CD4-positive, alpha-beta T cell (primary cell): ENCODE measurements at regions of chr11 and their contacts with region 1.

Region 1: DNA sequence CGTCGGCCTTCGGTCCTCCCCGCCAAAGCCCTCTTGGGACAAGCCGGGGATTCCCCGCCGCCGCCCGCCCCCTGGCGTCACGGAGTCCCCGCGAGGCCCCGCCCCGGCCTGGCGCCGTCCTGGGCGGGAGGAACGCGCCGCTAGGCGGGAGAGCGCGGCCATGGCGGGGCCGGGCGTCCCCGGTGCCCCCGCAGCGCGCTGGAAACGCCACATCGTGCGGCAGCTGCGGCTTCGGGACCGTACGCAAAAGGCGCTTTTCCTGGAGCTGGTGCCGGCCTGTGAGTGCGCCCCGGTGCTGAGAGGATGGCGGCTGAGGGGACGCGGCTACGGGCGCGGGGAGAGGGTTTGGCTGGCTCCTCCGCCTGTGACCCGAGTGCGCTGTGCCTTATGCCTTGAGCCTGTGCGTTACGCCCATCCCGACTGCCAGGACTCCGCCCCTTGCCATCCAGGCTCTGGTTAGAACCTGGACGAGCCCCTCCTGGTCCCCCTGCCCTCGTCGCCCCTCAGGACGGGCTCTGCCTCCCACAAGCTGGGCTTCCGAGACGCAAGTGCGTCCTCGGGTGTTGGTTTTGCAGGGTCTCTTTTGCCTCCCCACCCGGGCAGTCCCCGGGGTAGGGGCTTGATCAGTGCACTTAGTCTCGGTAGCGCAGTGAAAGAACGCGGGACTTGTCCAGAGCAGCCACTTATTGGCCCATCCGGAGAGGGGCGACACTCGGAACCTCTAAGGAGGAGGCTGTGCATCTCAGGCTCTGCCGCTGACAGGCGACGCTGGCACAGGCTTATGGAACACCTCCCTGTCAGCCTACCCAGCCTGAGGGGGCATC is at the start of gene ATG16L2:
- DNase-seq: peak in 13 of 14 experiments; percentile 78 to 95 (median 87)
- ATAC-seq: peak; percentile 81
- H3K4me3 ChIP-seq: peak within 1 kb of the TSS; percentile 96
- H3K4me3 Mint-ChIP-seq: peak within 1 kb of the TSS; percentile 99
- H3K27ac ChIP-seq: peak within 1 kb of the TSS; percentile 97 to 100
- H3K27ac Mint-ChIP-seq: peak within 1 kb of the TSS; percentile 97
- H3K4me1 ChIP-seq: peaks cover 38% of the 10 kb centered on the region
- H3K4me1 Mint-ChIP-seq: peaks cover 57% of the 10 kb centered on the region
- H3K27me3 ChIP-seq: no peaks in the 10 kb centered on the region
- H3K27me3 Mint-ChIP-seq: no peaks in the 10 kb centered on the region
- CTCF ChIP-seq: peak; percentile 29
- total RNA-seq, gene ATG16L2: 58.3 to 61.6 TPM

Region 2: GRCh38 chr11:71928737-71929452 is 885.6 kb before region 1 on chr11 and contains the start of gene RNF121:
- CTCF ChIA-PET with region 1: no interaction called
- POLR2A ChIA-PET with region 1: no interaction called
- intact Hi-C with region 1: loop called in 1 of 2 experiments (anchors 10 kb)
- DNase-seq: peak; percentile 93 to 98 (median 97)
- ATAC-seq: peak; percentile 86
- H3K4me3 ChIP-seq: peak within 1 kb of the TSS; percentile 79
- H3K4me3 Mint-ChIP-seq: peak within 1 kb of the TSS; percentile 96
- H3K27ac ChIP-seq: peak within 1 kb of the TSS; percentile 92 to 95
- H3K27ac Mint-ChIP-seq: peak within 1 kb of the TSS; percentile 93
- H3K4me1 ChIP-seq: peaks cover 32% of the 10 kb centered on the region
- H3K4me1 Mint-ChIP-seq: peaks cover 57% of the 10 kb centered on the region
- H3K27me3 ChIP-seq: no peaks in the 10 kb centered on the region
- H3K27me3 Mint-ChIP-seq: no peaks in the 10 kb centered on the region
- CTCF ChIP-seq: no peak
- total RNA-seq, gene RNF121: 10.1 to 10.4 TPM

Region 3: DNA sequence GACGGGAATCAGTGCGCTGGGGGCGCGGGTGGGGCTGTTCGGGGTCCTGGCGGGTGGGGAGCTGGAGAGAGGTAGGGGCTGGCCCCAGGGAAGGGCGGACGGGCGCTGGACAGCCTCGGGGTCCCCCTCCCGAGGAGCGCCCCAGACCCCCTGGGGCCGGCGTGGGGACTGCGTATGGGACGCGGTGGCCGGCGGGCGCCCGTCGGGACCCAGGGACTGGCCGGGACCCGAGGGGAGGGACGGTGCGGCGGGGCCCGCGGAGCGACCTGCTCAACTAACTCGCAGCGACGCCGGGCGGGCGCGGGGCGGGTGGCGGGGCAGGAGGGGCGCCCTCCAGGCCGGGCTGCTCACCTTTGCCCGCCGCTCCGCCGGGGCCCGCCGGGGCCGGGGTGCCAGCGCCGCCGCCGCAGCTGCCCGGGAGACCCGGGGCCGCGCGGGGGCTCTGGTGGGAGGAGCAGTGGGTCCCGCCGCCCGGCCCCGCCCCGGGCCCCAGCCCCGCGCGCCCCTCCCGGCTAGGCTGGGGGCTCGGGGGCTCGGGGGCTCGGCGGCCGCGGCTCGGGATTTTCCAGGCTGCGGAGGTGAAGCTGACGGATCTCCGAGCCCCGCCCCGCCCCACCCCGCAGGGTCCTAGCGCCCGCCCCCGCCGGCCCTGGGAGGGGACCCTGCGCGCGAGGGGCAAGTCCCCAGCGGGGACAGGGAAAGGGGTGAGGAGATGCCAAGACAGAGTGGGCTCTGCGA is 33.0 kb before region 1 on chr11:
- CTCF ChIA-PET with region 1: interaction called, 3 read pairs
- POLR2A ChIA-PET with region 1: interaction called, 5 read pairs
- intact Hi-C with region 1: loop called in 1 of 2 experiments (anchors 1 kb)
- DNase-seq: peak; percentile 22 to 87 (median 50)
- ATAC-seq: peak; percentile 81
- H3K4me3 ChIP-seq: peak overlapping the region; percentile 55
- H3K4me3 Mint-ChIP-seq: peak overlapping the region; percentile 90
- H3K27ac ChIP-seq: peak overlapping the region in 1 of 2 donors; percentile 17
- H3K27ac Mint-ChIP-seq: peak overlapping the region; percentile 45
- H3K4me1 ChIP-seq: peaks cover 45% of the 10 kb centered on the region
- H3K4me1 Mint-ChIP-seq: peaks cover 24% of the 10 kb centered on the region
- H3K27me3 ChIP-seq: no peaks in the 10 kb centered on the region
- H3K27me3 Mint-ChIP-seq: no peaks in the 10 kb centered on the region
- CTCF ChIP-seq: no peak

Region 4: DNA sequence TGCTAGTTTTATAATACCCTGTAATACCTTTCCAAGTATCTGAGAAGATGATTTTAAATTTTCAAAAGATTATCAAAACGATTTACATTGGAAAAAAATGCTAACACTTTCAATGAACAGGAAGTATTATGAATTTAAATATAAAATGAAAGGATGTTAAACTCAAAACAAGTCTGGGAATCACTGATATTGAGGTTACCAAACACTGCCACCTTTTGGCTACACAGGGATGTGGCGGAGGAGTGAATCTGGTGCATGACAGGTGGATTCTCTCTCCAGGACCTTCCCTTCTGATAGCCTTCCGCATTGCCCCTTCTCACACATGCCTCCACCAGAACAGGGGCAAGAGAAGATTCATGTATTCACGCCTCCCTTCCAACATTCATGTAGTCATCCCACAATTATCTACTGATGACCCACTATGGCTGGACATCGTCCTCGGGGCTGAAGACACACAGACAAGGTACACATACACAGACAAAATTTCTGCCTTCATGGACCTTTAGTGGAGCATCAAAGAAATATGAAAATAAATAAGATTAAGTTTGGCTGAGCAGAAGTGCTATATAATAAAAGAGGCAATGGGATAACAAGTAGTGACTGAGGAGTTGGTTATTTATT is 34.5 kb after region 1 on chr11:
- CTCF ChIA-PET with region 1: no interaction called
- POLR2A ChIA-PET with region 1: no interaction called
- intact Hi-C with region 1: no loop called
- DNase-seq: peak in 12 of 14 experiments; percentile 23 to 72 (median 32)
- ATAC-seq: peak; percentile 64
- H3K4me3 ChIP-seq: no peak overlapping the region
- H3K4me3 Mint-ChIP-seq: no peak overlapping the region
- H3K27ac ChIP-seq: no peak overlapping the region
- H3K27ac Mint-ChIP-seq: peak overlapping the region; percentile 25
- H3K4me1 ChIP-seq: peaks cover 4% of the 10 kb centered on the region
- H3K4me1 Mint-ChIP-seq: peaks cover 12% of the 10 kb centered on the region
- H3K27me3 ChIP-seq: no peaks in the 10 kb centered on the region
- H3K27me3 Mint-ChIP-seq: no peaks in the 10 kb centered on the region
- CTCF ChIP-seq: peak; percentile 72

Region 5: DNA sequence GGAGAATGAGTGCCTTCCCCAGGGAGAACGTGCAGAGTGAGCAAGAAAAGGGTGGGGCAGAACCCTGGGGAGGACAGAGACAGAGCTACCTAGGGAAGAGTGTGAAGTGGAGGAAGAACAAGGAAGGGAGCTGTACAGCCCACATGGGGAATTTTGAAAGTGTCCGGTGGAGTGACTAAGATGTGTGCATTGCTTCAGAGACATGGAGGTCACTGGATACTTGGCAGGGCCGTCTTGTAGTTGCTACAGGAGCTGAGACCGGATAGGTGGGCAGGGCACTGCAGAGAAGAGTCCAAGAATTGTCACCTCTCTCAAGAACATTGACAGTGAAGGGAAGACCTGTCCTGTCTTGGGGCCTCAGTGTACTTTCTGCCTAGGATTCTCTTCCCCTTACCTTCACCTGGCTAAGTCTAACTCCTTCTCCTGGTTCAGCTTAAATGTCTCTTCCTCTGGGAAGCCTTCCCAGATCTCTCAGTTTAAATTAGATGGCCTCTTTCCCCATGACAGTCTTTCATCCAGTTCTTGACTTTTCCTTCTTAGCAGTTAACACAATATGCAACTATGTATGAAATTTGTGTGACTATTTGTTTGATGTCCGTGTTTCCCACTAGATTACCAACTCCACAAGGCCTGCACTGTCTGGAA is 448.5 kb after region 1 on chr11:
- CTCF ChIA-PET with region 1: no interaction called
- POLR2A ChIA-PET with region 1: no interaction called
- intact Hi-C with region 1: no loop called
- DNase-seq: peak in 1 of 14 experiments; percentile 2
- ATAC-seq: no peak
- H3K4me3 ChIP-seq: no peak overlapping the region
- H3K4me3 Mint-ChIP-seq: no peak overlapping the region
- H3K27ac ChIP-seq: no peak overlapping the region
- H3K27ac Mint-ChIP-seq: no peak overlapping the region
- H3K4me1 ChIP-seq: no peaks in the 10 kb centered on the region
- H3K4me1 Mint-ChIP-seq: no peaks in the 10 kb centered on the region
- H3K27me3 ChIP-seq: peaks cover 19 to 24% of the 10 kb centered on the region in 2 experiments
- H3K27me3 Mint-ChIP-seq: peaks cover 42% of the 10 kb centered on the region
- CTCF ChIP-seq: no peak